Gastrocnemius medialis (tissue), 4 donors: ENCODE measurements at regions of chr2 and their contacts with region 1.

Region 1: DNA sequence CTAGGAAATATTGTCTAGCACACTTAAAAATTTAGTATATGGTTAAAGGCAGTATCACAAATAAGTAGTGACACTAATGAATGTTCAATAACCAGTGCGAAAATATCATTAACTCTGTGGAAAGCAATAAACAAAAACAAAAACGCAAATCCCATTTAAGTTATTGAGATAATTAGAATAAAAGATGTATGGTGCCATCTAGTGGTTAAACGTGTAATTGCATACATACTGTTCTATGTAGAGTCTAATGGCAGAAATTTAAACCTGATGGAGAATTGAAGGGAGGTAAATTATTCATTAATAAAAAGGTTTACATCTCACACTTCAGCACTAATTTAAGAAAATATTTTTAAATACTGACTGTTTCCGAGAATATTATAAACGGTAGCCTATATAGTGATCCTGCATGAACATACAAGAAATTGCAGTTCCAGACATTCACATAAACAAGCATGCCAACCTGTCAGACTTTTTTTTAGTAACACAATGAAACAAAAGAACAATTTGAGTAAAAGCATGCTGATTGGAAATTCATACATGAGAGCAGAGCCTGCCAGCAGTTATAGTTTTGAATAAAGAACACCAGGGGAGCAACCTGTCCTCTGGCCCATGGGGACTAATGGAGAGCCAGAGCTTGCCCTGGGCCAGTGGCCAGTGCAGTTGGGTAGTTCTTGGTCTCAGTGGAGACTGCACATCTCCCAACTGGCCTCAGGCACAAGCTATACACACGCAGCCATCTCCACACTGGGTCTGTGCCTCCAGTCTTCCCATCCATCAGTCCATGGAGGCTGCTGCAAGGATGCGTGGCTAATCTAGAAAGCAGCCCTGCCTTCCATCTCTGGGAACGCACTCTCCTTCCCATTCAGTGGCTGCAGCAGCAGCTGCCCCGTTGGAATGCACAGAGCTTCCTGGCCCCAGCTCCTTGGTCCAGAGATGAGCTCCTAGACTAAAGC is 28.0 kb downstream of the GCG start:
- DNase-seq: no peak
- ATAC-seq: peak in 1 of 2 donors; percentile 49
- H3K4me3 ChIP-seq: no peak overlapping the region
- H3K27ac ChIP-seq: no peak overlapping the region
- H3K4me1 ChIP-seq: no peaks in the 10 kb centered on the region
- H3K27me3 ChIP-seq: no peaks in the 10 kb centered on the region
- CTCF ChIP-seq: peak; percentile 58 to 83 (median 59)
- POLR2A ChIP-seq: no peak

Region 2: DNA sequence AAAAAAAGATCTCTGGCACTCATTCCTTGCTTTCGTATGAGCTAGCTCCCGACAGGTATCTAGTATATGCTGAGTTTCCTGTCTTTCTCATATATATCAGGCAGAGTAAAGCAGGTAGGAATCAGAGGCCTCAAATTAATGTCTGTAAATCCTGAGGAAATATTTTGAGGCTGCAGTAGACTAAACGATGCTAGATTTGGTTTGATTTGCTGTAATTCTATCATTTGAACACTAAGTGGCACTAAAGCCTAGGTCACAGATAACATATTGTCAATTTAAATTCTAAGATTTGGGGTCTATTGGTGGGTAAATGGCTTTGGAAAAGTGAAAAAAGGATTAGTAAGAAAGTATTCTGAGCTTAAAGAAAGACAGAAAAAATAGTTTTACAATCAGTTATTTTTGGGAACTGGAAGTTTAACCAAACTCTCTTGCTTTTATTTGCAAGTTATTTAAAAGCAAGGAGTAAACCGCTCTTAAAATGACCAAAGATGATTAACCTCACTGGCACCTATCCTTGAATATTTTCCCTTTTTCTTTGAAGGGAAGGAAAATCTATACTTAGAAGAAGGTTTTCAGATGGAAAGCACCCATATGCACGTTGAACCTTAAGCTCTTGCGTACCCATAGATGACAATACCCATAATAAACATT is 537.4 kb before region 1 on chr2:
- in situ Hi-C with region 1: loop called in 2 of 4 experiments (anchors 10 to 25 kb)
- intact Hi-C with region 1: no loop called
- DNase-seq: no peak
- ATAC-seq: no peak
- H3K4me3 ChIP-seq: no peak overlapping the region
- H3K27ac ChIP-seq: no peak overlapping the region
- H3K4me1 ChIP-seq: no peaks in the 10 kb centered on the region
- H3K27me3 ChIP-seq: no peaks in the 10 kb centered on the region
- CTCF ChIP-seq: peak in 2 of 5 experiments; percentile 21 to 32
- POLR2A ChIP-seq: no peak

Region 3: DNA sequence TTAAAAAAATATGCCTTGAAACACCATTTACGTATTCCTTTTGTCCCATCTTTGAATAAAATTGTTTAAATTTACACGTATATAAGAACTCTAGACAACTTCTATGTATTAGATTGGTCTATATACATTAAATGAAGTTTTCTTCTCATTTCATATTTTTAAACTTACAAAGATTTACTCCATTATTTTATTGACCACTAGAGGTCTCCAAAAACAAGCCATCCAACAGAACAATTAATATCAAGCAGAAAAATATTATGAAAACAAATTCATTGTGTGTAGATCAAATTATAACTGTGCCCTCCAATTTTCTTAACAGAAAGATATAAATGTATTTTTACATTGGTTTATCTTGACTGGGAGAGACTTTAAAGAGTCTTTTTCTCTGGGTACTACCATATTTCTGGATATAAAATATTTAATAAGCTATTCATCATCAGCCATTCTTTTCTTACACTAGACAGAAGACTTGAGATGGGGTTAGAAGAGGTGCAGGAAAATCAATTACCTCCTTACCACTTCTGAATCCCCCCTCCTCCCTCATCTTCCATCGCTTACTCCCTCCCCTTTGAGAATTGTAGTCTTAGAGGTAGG is 116.5 kb before region 1 on chr2:
- in situ Hi-C with region 1: loop called (anchors 5 to 10 kb)
- intact Hi-C with region 1: loop called (anchors 2 kb)
- DNase-seq: no peak
- ATAC-seq: no peak
- H3K4me3 ChIP-seq: no peak overlapping the region
- H3K27ac ChIP-seq: no peak overlapping the region
- H3K4me1 ChIP-seq: no peaks in the 10 kb centered on the region
- H3K27me3 ChIP-seq: no peaks in the 10 kb centered on the region
- CTCF ChIP-seq: peak in 4 of 5 experiments; percentile 14 to 66 (median 56)
- POLR2A ChIP-seq: no peak

Region 4: GRCh38 chr2:162013514-162014475 is 110.3 kb before region 1 on chr2:
- in situ Hi-C with region 1: loop called (anchors 5 to 10 kb)
- intact Hi-C with region 1: loop called (anchors 2 kb)
- DNase-seq: no peak
- ATAC-seq: no peak
- H3K4me3 ChIP-seq: peak overlapping the region in 1 of 4 donors; percentile 10
- H3K27ac ChIP-seq: no peak overlapping the region
- H3K4me1 ChIP-seq: no peaks in the 10 kb centered on the region
- H3K27me3 ChIP-seq: no peaks in the 10 kb centered on the region
- CTCF ChIP-seq: no peak
- POLR2A ChIP-seq: no peak